T-cell (primary cell): ENCODE measurements at regions of chr10 and their contacts with region 1.

Region 1: GRCh38 chr10:11225935-11226334 is 208.3 kb downstream of the CELF2 start:
- DNase-seq: peak in 33 of 35 experiments; percentile 29 to 77 (median 46)
- ATAC-seq: peak; percentile 51 to 61 (median 57)
- H3K4me3 ChIP-seq: peak overlapping the region in 1 of 2 donors; percentile 12
- H3K4me3 Mint-ChIP-seq: peak overlapping the region in 2 of 3 donors; percentile 25 to 67
- H3K27ac ChIP-seq: peak overlapping the region; percentile 82
- H3K27ac Mint-ChIP-seq: peak overlapping the region; percentile 88 to 92
- H3K4me1 ChIP-seq: peaks cover 43 to 73% of the 10 kb centered on the region in 2 experiments
- H3K4me1 Mint-ChIP-seq: peaks cover 96 to 98% (median 97%) of the 10 kb centered on the region in 3 donors
- H3K27me3 ChIP-seq: no peaks in the 10 kb centered on the region
- H3K27me3 Mint-ChIP-seq: no peaks in the 10 kb centered on the region

Region 2: DNA sequence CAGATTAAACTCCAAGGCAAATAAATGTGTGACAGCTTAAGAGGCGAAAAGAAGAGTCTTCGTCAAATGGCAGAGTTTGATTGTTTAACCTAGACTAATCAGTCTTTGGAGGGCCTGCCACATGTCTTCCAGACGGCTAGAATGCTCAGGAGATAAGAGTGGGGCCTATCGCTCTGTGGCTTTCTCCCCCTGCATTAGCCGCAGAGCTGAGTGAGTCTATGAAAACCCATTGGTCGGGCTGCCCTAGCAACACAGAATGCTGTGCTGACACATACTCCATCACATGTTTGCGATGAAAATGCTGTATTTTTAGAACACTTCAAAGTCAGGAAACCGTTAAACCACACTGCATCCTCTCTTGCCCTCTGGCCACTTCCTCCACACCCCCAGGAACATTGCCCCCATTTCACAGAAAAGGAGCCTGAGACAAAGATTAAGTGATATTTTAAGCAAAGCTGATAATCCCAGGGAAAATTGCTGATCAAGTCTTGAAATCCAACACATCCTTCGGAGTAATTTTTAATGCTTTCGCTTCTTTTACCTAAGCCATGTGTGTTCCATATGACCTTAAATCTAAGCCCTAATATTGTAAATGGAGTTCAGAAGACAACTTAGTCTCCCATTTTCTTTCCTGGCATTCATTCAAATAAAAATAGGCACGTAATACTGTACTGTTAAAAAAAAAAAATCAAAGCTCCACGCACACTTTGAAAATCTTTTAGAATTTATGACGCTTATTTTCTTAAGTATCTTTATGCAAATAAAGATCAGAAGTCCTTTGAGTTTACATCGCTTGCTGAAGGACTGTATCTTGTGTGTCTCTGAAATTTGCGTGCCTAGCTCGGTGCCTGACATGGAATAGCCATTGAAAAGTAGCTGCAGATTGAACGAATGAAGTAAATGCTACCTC is 47.1 kb before region 1 on chr10:
- CTCF ChIA-PET with region 1: interaction called, 4 to 7 read pairs
- POLR2A ChIA-PET with region 1: interaction called in 1 of 2 experiments, 14 read pairs
- DNase-seq: peak; percentile 52 to 92 (median 81)
- ATAC-seq: peak; percentile 86 to 89 (median 88)
- H3K4me3 ChIP-seq: peak overlapping the region; percentile 31 to 58
- H3K4me3 Mint-ChIP-seq: peak overlapping the region in 1 of 3 donors; percentile 71
- H3K27ac ChIP-seq: peak overlapping the region; percentile 94
- H3K27ac Mint-ChIP-seq: peak overlapping the region in 1 of 2 donors; percentile 94
- H3K4me1 ChIP-seq: peaks cover 78 to 84% of the 10 kb centered on the region in 2 experiments
- H3K4me1 Mint-ChIP-seq: peaks cover 30 to 31% (median 31%) of the 10 kb centered on the region in 3 donors
- H3K27me3 ChIP-seq: no peaks in the 10 kb centered on the region
- H3K27me3 Mint-ChIP-seq: no peaks in the 10 kb centered on the region

Region 3: DNA sequence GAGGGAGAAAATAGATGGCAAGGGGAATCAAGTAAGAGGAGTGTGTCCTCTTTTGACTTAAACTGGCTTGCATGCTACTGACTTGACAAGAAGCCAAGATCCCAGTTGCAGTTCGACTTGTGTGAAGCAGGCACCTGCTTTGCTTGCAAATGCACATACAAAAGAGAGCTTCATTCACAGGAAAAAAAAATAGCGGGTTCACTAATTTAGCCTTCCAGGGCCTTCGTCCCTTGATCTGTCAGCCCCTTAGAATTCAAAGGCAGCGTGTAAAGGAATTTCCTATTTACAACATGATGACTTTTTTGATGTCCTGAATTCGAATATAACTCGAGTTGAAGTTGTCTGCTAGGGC is 16.1 kb before region 1 on chr10:
- CTCF ChIA-PET with region 1: interaction called, 3 to 12 read pairs
- POLR2A ChIA-PET with region 1: interaction called, 3 read pairs
- DNase-seq: peak in 1 of 35 experiments; percentile 59
- ATAC-seq: peak in 1 of 4 experiments; percentile 20
- H3K4me3 ChIP-seq: no peak overlapping the region
- H3K4me3 Mint-ChIP-seq: peak overlapping the region; percentile 70 to 76 (median 75)
- H3K27ac ChIP-seq: peak overlapping the region; percentile 57
- H3K27ac Mint-ChIP-seq: peak overlapping the region; percentile 77 to 82
- H3K4me1 ChIP-seq: peaks cover 34 to 85% of the 10 kb centered on the region in 2 experiments
- H3K4me1 Mint-ChIP-seq: peaks cover 98 to 100% (median 100%) of the 10 kb centered on the region in 3 donors
- H3K27me3 ChIP-seq: no peaks in the 10 kb centered on the region
- H3K27me3 Mint-ChIP-seq: no peaks in the 10 kb centered on the region

Region 4: DNA sequence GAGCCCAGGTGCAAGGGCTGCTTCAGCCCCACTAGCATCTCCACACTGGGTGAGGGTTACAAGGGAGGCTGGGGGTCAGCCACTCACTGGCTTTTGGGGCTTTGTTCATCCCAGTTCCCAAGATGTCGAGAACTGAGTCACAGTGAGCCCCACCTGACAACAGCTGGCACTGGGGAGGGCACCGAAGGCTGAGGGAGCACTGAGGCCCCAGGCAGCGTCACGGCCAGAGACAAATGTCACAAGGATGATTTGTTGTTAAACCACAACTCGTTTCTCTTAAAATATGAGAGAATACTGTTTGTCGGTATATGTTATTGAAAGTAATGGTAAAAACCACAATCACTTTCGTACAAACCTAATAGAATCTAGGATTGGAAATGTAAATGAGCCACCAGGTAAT is 11.6 kb after region 1 on chr10:
- CTCF ChIA-PET with region 1: interaction called in 1 of 2 experiments, 10 read pairs
- POLR2A ChIA-PET with region 1: interaction called, 3 to 12 read pairs
- DNase-seq: peak in 24 of 35 experiments; percentile 18 to 60 (median 43)
- ATAC-seq: peak in 2 of 4 experiments; percentile 13 to 27
- H3K4me3 ChIP-seq: no peak overlapping the region
- H3K4me3 Mint-ChIP-seq: peak overlapping the region; percentile 40 to 55 (median 45)
- H3K27ac ChIP-seq: peak overlapping the region; percentile 56
- H3K27ac Mint-ChIP-seq: peak overlapping the region; percentile 74 to 79
- H3K4me1 ChIP-seq: peaks cover 22 to 67% of the 10 kb centered on the region in 2 experiments
- H3K4me1 Mint-ChIP-seq: peaks cover 58 to 96% (median 94%) of the 10 kb centered on the region in 3 donors
- H3K27me3 ChIP-seq: no peaks in the 10 kb centered on the region
- H3K27me3 Mint-ChIP-seq: no peaks in the 10 kb centered on the region

Region 5: GRCh38 chr10:11242443-11243387 is 16.8 kb after region 1 on chr10:
- CTCF ChIA-PET with region 1: interaction called in 1 of 2 experiments, 10 read pairs
- POLR2A ChIA-PET with region 1: interaction called, 5 to 12 read pairs
- DNase-seq: peak in 1 of 35 experiments; percentile 20
- ATAC-seq: peak in 2 of 4 experiments; percentile 11 to 23
- H3K4me3 ChIP-seq: no peak overlapping the region
- H3K4me3 Mint-ChIP-seq: peak overlapping the region in 1 of 3 donors; percentile 22
- H3K27ac ChIP-seq: peak overlapping the region; percentile 59
- H3K27ac Mint-ChIP-seq: peak overlapping the region; percentile 78 to 83
- H3K4me1 ChIP-seq: peaks cover 21 to 80% of the 10 kb centered on the region in 2 experiments
- H3K4me1 Mint-ChIP-seq: peaks cover 8 to 62% (median 61%) of the 10 kb centered on the region in 3 donors
- H3K27me3 ChIP-seq: no peaks in the 10 kb centered on the region
- H3K27me3 Mint-ChIP-seq: no peaks in the 10 kb centered on the region